ENCODE measurements at regions of chr2 and their contacts with region 1.

Region 1: GRCh38 chr2:3423492-3424175 is 44.1 kb downstream of the TRAPPC12 start:
- DNase-seq: peak; percentile 57 to 83 (median 75)
- H3K4me3 ChIP-seq: no peak overlapping the region
- H3K27ac ChIP-seq: no peak overlapping the region
- H3K4me1 ChIP-seq: no peaks in the 10 kb centered on the region
- H3K27me3 ChIP-seq: no peaks in the 10 kb centered on the region
- CTCF ChIP-seq: peak; percentile 72 to 92 (median 89)
- EP300 ChIP-seq: no peak
- POLR2A ChIP-seq: no peak

Region 2: GRCh38 chr2:3169106-3169870 is 254.3 kb before region 1 on chr2:
- intact Hi-C with region 1: no loop called
- DNase-seq: no peak
- H3K4me3 ChIP-seq: no peak overlapping the region
- H3K27ac ChIP-seq: no peak overlapping the region
- H3K4me1 ChIP-seq: no peaks in the 10 kb centered on the region
- H3K27me3 ChIP-seq: no peaks in the 10 kb centered on the region
- CTCF ChIP-seq: no peak
- EP300 ChIP-seq: no peak
- POLR2A ChIP-seq: no peak

Region 3: GRCh38 chr2:3461801-3462492 is 38.3 kb after region 1 on chr2:
- intact Hi-C with region 1: loop called in 1 of 4 experiments (anchors 2 kb)
- DNase-seq: peak in 1 of 5 donors; percentile 40
- H3K4me3 ChIP-seq: no peak overlapping the region
- H3K27ac ChIP-seq: no peak overlapping the region
- H3K4me1 ChIP-seq: peaks cover 2% of the 10 kb centered on the region
- H3K27me3 ChIP-seq: no peaks in the 10 kb centered on the region
- CTCF ChIP-seq: peak; percentile 69 to 90 (median 83)
- EP300 ChIP-seq: no peak
- POLR2A ChIP-seq: no peak

Region 4: DNA sequence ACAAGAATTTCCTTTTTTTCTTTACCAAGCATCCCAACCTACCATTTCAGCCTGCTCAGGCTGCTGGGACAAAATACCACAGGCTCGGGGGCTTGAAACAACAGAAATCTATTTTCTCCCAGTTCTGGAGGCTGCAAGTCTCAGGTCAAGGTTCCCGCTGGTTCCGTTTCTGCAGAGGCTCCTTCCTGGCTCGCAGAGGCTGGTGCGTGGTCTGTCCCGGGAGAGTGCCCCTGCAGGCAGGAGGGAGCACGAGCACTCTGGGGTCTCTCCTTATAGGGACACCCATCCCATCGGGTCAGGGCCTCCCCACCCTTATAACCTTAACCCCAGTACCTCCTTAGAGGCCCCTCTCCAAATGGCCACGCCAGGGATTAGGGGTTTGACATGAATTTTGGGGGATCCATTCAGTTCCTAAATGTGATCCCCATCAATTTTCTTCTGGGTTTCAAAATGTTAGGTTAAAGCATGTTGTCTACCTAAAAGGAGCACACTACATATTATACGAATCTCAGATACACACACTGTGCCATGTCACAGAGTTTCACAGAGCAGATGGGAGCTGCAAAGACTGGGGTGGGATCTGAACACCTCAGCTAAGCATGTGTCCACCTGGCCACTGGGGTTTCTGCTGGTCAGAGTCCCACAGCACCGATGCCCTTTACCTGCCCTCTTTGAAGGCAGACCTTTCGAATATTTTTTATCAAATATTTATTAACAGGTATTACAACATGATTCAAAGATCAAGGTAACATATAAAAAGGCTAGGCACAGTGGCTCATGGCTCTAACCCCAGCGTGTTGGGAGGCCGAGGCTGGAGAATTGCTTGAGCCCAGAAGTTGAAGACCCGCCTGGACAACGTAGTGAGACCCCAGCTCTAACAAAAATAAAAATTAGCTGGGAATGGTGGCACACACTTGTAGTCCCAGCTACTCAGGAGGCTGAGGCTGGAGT is 113.3 kb after region 1 on chr2:
- intact Hi-C with region 1: loop called in 1 of 4 experiments (anchors 10 kb)
- DNase-seq: peak; percentile 67 to 80 (median 73)
- H3K4me3 ChIP-seq: peak overlapping the region; percentile 37
- H3K27ac ChIP-seq: peak overlapping the region; percentile 86 to 91
- H3K4me1 ChIP-seq: peaks cover 10% of the 10 kb centered on the region
- H3K27me3 ChIP-seq: no peaks in the 10 kb centered on the region
- CTCF ChIP-seq: peak in 2 of 3 donors; percentile 50
- EP300 ChIP-seq: no peak
- POLR2A ChIP-seq: no peak

Region 5: DNA sequence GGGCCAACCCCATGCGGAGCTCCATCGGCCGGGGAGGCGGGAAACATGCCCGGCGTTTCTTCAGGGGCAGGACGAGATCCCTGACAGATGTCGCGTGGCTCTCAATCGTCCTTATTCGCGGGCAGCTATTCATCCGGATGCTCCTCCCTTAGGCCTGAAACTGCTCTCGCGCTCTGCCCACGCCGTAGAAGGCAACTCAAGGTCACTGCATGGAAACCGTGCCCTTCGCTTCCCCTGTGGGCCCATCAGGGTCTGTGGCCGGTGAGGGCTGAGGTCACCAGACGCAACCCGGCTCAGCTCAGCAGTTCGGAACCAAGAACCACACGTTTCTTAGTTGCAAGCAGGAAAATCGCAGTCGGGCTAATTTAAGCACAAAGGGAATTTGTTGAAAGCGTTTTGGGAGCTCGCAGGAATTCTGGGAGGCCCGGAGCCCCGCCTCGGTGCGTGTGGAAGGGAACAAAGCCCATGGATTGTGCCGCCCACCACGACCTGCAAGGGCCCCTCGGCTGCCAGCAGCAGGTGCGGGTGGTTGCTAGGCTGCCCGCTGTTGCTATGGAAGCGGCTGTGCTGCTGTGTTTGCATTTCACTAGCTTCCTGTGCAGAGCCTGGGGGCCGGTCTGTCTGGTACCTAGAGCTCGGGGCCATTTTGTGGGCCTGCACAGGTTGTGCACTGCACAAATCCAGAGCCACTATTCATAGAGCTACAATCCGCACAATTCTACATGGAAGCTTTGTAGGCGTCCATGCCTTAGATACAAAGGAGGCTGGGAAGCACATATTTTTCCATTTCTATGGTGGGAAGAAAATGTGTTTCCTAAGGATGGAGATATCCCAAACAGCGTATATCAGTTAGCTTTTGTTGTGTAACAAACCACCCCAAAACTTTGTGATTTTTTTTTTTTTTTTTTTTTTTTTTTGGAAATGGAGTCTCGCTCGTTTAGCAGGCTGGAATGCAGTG is 228.3 kb after region 1 on chr2:
- intact Hi-C with region 1: loop called in 3 of 4 experiments (anchors 5 to 10 kb)
- DNase-seq: peak; percentile 43 to 78 (median 71)
- H3K4me3 ChIP-seq: peak overlapping the region; percentile 25
- H3K27ac ChIP-seq: peak overlapping the region; percentile 35 to 89
- H3K4me1 ChIP-seq: peaks cover 8% of the 10 kb centered on the region
- H3K27me3 ChIP-seq: no peaks in the 10 kb centered on the region
- CTCF ChIP-seq: no peak
- EP300 ChIP-seq: no peak
- POLR2A ChIP-seq: no peak

Measured in ovary (tissue), 10 donors.